HepG2 (cell line): ENCODE measurements at regions of chr9 and their contacts with region 1.

Region 1: DNA sequence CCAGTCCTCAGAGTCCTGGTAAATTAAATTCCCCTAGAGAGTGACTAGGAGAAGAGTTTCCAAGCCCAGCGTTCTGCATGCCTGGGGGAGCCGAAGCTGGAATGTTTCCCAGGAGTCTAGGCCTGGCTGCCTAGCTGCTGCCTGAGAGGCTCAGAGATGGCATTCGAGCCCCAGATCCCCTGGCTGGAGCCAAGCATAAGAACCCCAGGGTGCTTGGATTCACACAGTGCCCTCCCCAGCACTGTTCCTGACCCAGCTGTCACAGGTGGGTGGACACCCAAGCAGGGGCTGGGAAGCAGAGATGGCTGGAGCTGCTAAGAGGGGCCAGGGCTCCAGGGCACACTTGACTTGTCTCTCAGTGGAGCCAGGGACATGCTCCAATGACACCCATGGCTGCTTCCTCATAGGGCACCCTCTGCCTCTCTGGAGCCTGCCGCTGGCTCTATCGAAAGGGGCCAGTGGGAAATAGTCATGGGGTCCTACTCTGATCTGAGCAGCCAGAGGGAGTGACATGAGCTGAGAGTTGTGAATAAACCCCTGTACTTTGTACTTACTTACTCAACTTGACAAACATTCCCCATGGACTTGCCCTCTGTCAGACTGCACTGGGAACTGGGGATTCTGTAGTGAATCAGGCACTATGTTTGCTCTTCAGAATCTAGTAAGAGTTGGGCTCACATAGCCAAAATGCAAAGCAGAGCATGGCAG is 62.6 kb upstream of the XPA start:
- DNase-seq: peak; percentile 96
- ATAC-seq: peak; percentile 95
- H3K4me3 ChIP-seq: peak overlapping the region; percentile 25 to 64 (median 37); a peak in 3 of 6 replicates
- H3K27ac ChIP-seq: peak overlapping the region; percentile 81
- H3K4me1 ChIP-seq: peaks cover 40% of the 10 kb centered on the region
- H3K27me3 ChIP-seq: no peaks in the 10 kb centered on the region
- CTCF ChIP-seq: peak; percentile 29
- EP300 ChIP-seq: peak in 1 of 2 experiments; percentile 83; a peak in 2 of 4 replicates
- POLR2A ChIP-seq: peak; percentile 53 to 57; a peak in 2 of 4 replicates
- RAD21 ChIP-seq: peak; percentile 36; the same call in 1 of the 2 replicates

Region 2: GRCh38 chr9:97788763-97789663 is 29.3 kb after region 1 on chr9:
- CTCF ChIA-PET with region 1: no interaction called
- POLR2A ChIA-PET with region 1: interaction called, 26 read pairs
- in situ Hi-C with region 1: no loop called
- intact Hi-C with region 1: no loop called
- DNase-seq: peak; percentile 84
- ATAC-seq: peak; percentile 94
- H3K4me3 ChIP-seq: no peak overlapping the region
- H3K27ac ChIP-seq: peak overlapping the region; percentile 23
- H3K4me1 ChIP-seq: peaks cover 31% of the 10 kb centered on the region
- H3K27me3 ChIP-seq: no peaks in the 10 kb centered on the region
- CTCF ChIP-seq: no peak; the same call in 1 of the 2 replicates
- EP300 ChIP-seq: peak in 1 of 2 experiments; percentile 69; a peak in 2 of 4 replicates
- POLR2A ChIP-seq: no peak
- RAD21 ChIP-seq: no peak